GM10248 (cell line): ENCODE measurements at regions of chr1 and their contacts with region 1.

Region 1: DNA sequence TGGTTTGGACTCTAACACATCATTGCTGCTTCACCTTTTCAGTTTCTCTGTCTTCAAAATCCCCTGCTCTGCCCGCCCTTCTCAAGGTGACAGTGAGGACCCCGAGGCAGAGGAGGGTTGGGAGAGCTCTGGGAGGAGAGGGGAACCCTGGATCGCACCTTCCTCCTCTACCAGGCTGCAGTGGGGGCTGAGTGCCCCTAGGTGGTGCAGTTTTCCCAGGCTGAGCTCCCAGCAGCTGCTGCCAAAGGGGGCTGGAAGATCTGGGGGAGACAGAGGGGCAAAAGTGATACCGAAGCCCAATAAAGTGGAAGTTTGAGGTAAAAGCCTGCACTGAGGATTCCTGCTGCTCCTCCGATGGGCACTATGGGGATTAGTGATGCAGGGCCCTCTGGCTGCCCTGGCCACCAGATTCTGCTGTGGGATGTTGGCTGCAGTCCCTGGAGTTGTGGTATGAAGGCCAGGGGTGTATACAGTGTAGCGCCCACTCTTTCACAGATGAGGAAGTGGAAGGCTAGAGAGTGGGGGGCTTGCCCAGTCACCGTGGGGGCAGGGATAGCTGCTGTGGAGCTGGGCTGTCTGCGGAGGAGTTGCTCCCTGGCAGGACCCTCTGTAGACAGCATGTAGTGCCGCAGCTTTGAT is 40.7 kb upstream of the SCMH1 start:
- DNase-seq: peak; percentile 66
- CTCF ChIP-seq: peak; percentile 78

Region 2: GRCh38 chr1:41023279-41023990 is 259.4 kb before region 1 on chr1:
- CTCF ChIA-PET with region 1: no interaction called
- POLR2A ChIA-PET with region 1: no interaction called
- DNase-seq: no peak
- CTCF ChIP-seq: no peak

Region 3: DNA sequence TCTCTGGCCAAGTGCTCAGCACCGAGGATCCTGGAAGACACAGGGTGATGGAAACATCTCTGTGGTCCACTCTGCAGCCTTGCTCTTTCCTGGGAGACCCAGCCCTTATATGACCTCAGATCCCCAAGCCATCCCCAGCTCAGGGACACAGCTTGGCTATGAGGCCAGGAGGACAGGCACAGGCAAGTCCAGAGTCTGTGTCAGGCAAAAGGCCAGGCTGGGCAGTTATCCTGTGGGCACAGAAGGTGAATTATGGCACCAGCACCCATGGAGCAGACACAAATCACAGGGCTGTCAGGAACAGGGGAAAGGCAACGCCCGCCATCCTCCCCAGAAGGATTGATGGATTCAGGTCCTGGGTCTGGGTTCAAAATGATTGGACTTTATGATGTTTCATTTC is 11.4 kb after region 1 on chr1:
- CTCF ChIA-PET with region 1: interaction called, 11 read pairs
- POLR2A ChIA-PET with region 1: no interaction called
- DNase-seq: no peak
- CTCF ChIP-seq: no peak

Region 4: DNA sequence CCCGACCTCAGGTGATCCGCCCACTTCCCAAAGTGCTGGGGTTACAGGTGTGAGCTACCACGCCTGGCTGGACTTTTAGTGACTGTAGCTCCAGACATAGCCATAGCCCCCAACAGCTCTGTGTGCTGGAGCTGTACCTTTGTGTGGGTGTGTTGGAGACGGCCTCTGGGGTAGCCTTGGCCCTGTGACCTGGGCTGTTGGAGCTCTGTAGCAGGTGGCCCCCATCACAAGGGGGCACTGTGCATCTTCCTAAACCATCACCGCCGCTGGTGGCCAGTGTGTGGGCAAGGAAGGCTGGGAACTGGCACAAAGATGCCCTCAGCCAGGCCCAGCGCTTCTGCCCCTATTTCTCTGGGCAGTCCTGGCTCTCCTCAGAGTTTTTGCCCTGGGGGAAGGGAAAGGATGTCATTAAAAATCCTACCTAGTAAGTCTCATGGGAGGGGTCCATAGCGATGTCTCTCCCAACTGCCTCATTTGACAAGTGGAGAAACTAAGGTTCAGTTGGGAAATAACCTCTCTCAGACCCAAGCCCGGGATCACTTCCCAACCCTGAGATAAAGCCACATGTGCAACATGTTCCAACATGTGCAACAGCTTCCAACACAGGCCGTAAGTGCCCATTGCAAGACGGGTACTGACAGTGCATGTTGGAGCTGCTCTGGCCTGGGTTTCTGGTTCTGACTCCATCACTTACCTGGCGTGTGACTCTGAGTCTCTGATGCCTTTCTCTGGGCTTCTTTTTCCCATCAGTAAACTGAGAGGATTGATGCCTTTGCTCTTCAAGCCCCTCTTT is 40.2 kb after region 1 on chr1:
- CTCF ChIA-PET with region 1: interaction called, 31 read pairs
- POLR2A ChIA-PET with region 1: no interaction called
- DNase-seq: peak; percentile 75
- CTCF ChIP-seq: peak; percentile 64

Region 5: GRCh38 chr1:41423511-41424221 is 140.9 kb after region 1 on chr1:
- CTCF ChIA-PET with region 1: interaction called, 39 read pairs
- POLR2A ChIA-PET with region 1: no interaction called
- DNase-seq: no peak
- CTCF ChIP-seq: peak; percentile 37